WTC11 (cell line): ENCODE measurements at regions of chr16 and their contacts with region 1.

Region 1: DNA sequence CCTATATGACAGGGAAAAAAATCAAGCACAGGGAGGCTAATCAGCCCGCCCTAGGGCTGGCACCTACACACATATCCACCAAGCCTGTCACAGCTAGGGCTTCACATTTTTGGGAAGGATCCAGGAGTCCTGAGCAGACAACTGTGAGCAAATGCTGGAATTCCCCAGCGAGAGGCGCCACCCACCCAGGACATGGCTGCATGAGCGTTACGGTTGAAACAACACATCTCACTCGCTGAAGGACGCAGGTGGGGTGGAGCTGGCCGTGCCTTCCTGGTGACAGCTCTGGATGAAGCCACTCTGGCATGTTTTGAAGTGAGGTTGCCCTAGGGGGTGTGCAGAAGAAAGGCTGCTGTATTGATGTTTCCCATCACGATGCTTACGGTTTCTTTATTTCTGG is 315.1 kb upstream of the EEF2KMT start:
- DNase-seq: peak; percentile 61
- ATAC-seq: peak; percentile 84
- H3K4me3 Mint-ChIP-seq: no peak overlapping the region
- H3K27ac Mint-ChIP-seq: no peak overlapping the region
- H3K4me1 Mint-ChIP-seq: peaks cover 3% of the 10 kb centered on the region; the same call in 1 of the 2 replicates
- H3K27me3 Mint-ChIP-seq: peaks cover 8% of the 10 kb centered on the region
- CTCF ChIP-seq: no peak

Region 2: GRCh38 chr16:5379954-5380353 is 32.8 kb before region 1 on chr16:
- CTCF ChIA-PET with region 1: no interaction called
- POLR2A ChIA-PET with region 1: no interaction called
- DNase-seq: no peak
- ATAC-seq: no peak
- H3K4me3 Mint-ChIP-seq: no peak overlapping the region
- H3K27ac Mint-ChIP-seq: no peak overlapping the region
- H3K4me1 Mint-ChIP-seq: peaks cover 9% of the 10 kb centered on the region
- H3K27me3 Mint-ChIP-seq: no peaks in the 10 kb centered on the region; the same call in 1 of the 2 replicates
- CTCF ChIP-seq: no peak

Region 3: DNA sequence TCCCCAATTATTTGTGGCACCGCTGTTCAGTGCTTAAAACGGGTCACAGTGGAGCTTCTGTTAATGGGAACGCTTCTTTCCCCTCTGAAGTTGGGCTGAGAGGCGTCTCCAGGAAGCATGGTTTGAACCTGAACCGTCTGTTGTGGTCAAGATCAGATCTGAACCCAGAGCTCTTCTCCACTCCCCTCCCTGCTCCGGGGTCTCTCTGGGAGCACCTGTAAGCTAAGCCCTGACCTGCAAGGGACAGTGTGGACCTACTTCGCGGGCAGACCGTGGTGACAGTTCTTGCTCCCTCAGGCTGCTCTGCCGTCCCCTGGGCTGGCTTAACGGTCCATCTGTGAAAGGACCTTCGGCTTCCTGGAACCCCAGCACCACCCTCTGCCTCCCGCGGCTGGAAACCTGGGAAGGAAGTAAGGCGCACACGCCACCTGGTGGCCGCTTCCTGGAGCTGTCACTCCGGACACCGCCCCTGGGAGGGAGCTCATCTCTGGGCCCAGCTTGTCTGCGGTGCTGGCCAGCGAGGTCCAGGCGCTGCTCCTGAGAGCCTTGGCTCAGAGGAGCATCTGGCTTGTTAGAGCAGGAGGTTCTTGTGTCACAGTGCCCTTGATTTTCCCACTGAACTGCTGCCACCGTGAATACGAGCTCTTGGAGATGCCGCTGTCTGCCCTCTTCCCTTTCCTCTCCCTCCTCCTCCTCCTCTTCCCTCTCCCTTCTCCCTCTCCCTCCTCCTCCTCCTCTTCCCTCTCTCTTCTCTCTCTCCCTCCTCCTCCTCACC is 203.3 kb after region 1 on chr16:
- CTCF ChIA-PET with region 1: interaction called, 14 read pairs
- POLR2A ChIA-PET with region 1: no interaction called
- DNase-seq: peak; percentile 40
- ATAC-seq: peak; percentile 90
- H3K4me3 Mint-ChIP-seq: no peak overlapping the region
- H3K27ac Mint-ChIP-seq: no peak overlapping the region
- H3K4me1 Mint-ChIP-seq: no peaks in the 10 kb centered on the region
- H3K27me3 Mint-ChIP-seq: peaks cover 2% of the 10 kb centered on the region
- CTCF ChIP-seq: peak; percentile 33; the same call in 1 of the 2 replicates